ENCODE measurements at regions of chr12 and their contacts with region 1.

Region 1: DNA sequence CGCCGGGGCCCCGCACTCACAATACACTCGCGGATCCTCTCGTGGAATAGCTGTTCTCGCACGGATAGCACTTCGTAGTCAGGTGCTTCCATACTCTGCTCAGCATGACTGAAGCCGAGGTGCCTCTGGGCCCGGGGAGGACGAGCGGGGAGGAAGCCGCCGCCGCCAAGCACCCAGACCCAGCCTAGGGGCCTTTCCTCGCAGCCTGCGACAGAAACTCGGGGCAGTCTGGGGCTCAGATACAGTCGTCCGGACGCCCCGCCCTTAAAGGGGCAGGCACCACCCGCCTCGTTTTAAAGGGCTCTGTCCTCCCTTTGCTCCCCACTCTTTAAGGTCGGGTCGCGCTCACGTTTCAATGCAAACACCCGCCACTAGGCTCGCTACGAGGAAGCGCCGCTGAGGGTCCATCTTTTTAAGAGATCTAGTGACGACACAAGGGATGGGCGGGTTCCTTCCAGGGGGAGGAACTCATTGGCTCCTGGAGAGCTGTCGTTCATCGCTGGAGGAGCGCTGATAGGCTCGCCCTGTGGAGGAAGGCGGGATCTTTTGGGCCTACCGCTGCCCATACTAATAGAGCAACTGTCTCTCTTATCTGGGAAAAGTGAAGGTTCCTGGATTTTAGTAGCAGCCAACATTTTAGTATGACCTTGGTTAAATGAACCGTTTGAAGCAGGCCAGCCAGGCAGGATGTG is at the start of gene LMBR1L:
- DNase-seq: peak; percentile 88
- H3K4me3 ChIP-seq: peak within 1 kb of the TSS; percentile 87
- CTCF ChIP-seq: peak; percentile 62

Region 2: DNA sequence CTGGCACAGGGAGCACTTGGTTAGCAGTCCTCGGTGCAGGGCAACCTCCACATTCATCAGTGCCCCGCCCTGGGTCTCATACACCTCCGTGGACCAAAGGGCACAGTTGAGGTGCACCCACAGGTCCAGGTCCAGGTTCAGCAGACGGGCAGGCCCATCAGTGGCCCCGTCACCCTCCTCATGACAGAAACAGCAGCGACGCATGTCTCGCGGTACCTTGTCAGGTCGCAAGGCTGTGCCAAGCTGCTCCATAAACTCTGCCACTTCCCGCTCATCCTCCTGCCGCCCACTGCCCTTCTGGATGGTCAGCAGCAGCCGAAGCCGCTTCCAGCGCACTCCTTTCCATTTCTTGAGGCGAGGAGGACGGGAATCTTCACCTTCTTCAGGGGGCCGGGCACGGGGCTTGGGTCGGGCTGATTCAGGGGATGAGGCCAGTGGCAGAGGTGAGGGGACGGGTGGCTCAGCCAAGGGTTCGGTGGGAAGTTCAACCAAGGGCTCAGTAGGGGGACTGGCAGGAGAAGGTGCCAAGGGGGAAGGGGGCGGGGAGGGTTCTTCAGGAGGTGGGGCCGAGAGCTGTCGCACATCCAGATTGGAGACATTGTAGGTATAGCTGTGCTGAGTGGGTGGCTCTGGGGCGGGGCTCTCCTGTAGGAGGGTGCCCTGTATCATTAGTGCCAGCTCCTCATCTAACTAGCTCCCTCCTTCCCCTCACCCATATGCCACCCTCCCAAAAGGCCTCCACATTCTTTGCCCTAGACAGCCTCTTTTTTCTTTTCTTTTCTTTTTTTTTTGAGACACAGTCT is 83.7 kb before region 1 on chr12:
- CTCF ChIA-PET with region 1: no interaction called
- POLR2A ChIA-PET with region 1: no interaction called
- DNase-seq: no peak
- H3K4me3 ChIP-seq: no peak overlapping the region
- CTCF ChIP-seq: no peak

Region 3: GRCh38 chr12:49098035-49098451 is 12.6 kb before region 1 on chr12:
- CTCF ChIA-PET with region 1: interaction called, 244 read pairs
- POLR2A ChIA-PET with region 1: interaction called, 4 read pairs
- DNase-seq: no peak
- H3K4me3 ChIP-seq: no peak overlapping the region
- CTCF ChIP-seq: peak; percentile 69